ENCODE measurements at regions of chr19 and their contacts with region 1.

Region 1: DNA sequence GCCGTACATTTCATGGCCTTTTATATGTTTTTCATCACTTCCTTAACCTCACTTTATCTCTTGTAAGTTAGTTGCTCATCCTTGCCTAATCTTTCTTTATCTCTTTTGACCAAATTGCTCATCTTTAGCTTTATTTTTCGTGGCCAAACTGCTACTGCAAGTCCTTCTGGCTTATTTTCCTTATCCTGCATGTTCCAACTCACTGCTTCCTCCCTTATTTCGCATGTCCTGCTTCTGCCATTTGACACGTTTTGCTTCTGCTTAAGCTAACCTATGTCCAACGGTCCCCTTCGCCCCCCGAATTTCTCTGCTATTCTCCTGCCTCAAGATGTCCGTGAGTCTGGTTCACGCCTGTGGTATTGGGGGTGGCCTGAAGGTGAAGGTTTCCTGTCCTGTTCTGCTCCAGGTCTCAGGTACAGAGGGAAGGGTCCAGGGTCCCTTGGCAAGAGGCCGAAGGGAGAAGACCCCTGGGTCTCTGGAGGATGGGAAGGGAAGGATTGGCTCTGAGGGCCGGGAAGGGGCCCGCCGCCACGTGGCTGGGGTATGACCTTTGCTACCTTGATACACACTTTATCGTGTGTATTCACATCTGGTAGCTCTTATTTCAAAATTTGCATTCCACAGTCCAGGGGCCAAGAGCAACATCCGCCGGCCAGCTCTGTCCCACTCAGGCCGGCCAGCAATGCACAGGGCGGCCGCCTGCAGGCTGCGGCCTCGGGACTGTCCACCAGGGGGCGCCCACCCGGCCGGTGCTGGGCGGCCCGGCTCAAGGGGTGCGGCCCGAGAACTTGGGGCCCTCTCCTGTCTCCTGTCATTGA is 2.9 kb upstream of the C19orf85 start:
- DNase-seq: peak; percentile 69
- H3K4me3 ChIP-seq: no peak overlapping the region
- H3K27ac ChIP-seq: peak overlapping the region; percentile 23
- H3K4me1 ChIP-seq: peaks cover 12% of the 10 kb centered on the region
- H3K27me3 ChIP-seq: no peaks in the 10 kb centered on the region
- CTCF ChIP-seq: no peak

Region 2: GRCh38 chr19:55503502-55504251 is 36.2 kb after region 1 on chr19:
- intact Hi-C with region 1: loop called (anchors 2 kb)
- DNase-seq: peak; percentile 93
- H3K4me3 ChIP-seq: peak overlapping the region; percentile 69
- H3K27ac ChIP-seq: peak overlapping the region; percentile 82
- H3K4me1 ChIP-seq: peaks cover 14% of the 10 kb centered on the region
- H3K27me3 ChIP-seq: no peaks in the 10 kb centered on the region
- CTCF ChIP-seq: peak; percentile 100

Region 3: GRCh38 chr19:55536951-55537740 is 69.7 kb after region 1 on chr19 and contains the start of gene SBK2:
- intact Hi-C with region 1: no loop called
- DNase-seq: no peak
- H3K4me3 ChIP-seq: peak within 1 kb of the TSS; percentile 56
- H3K27ac ChIP-seq: no peak within 1 kb of the TSS
- H3K4me1 ChIP-seq: no peaks in the 10 kb centered on the region
- H3K27me3 ChIP-seq: peaks cover 3% of the 10 kb centered on the region
- CTCF ChIP-seq: peak; percentile 51
- total RNA-seq, gene SBK2: 6.5 TPM

Measured in left ventricle myocardium inferior (tissue), 1 donor.